Ovary (tissue), 10 donors: ENCODE measurements at regions of chr12 and their contacts with region 1.

Region 1: DNA sequence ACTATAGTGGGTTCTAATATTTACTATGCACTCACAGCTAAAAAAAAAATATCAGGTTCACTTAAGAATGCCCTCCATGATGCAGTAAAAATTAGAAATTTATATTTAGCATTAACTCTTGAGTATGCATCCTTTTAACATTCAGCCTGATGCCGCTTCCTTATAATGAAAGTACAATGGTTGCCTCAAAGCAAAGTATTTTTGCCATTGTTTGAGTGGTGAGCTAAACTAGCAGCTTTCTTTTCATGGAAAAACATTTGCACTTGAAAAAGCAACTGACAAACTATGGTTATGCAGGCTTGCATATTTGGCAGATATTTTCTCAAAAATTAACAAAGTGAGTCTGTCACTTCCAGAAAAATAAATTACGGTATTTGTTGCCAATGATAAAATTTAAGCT is 188.6 kb downstream of the SLC6A15 start:
- DNase-seq: no peak
- H3K4me3 ChIP-seq: no peak overlapping the region
- H3K27ac ChIP-seq: no peak overlapping the region
- H3K4me1 ChIP-seq: no peaks in the 10 kb centered on the region
- H3K27me3 ChIP-seq: no peaks in the 10 kb centered on the region
- CTCF ChIP-seq: no peak
- EP300 ChIP-seq: no peak
- POLR2A ChIP-seq: no peak

Region 2: GRCh38 chr12:84745127-84745526 is 21.1 kb after region 1 on chr12:
- intact Hi-C with region 1: loop called in 1 of 4 experiments (anchors 2 kb)
- DNase-seq: no peak
- H3K4me3 ChIP-seq: no peak overlapping the region
- H3K27ac ChIP-seq: no peak overlapping the region
- H3K4me1 ChIP-seq: no peaks in the 10 kb centered on the region
- H3K27me3 ChIP-seq: no peaks in the 10 kb centered on the region
- CTCF ChIP-seq: no peak
- EP300 ChIP-seq: no peak
- POLR2A ChIP-seq: no peak